PC-9 (cell line): ENCODE measurements at regions of chr17 and their contacts with region 1.

Region 1: DNA sequence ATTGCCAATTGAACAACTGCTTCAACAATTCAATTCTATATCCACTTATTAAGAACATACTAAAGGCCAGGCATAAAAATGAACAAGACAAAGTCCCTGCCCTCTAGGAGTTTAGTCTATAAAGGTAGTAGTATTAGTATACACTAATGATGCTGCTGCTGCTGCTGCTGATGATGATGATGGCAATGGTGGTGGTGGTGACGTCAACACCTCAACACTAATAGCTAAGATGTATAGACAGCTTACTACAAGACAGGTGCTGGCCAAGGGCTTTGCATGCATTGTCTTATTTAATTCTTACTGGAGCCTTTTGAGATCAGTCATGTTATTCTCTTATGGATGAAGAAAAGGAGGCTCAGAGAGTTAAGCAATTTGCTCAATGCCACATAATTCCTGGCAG is 164.4 kb upstream of the ASIC2 start:
- DNase-seq: no peak
- H3K4me3 ChIP-seq: no peak overlapping the region
- H3K27ac ChIP-seq: no peak overlapping the region
- H3K4me1 ChIP-seq: no peaks in the 10 kb centered on the region
- H3K27me3 ChIP-seq: no peaks in the 10 kb centered on the region
- CTCF ChIP-seq: no peak

Region 2: DNA sequence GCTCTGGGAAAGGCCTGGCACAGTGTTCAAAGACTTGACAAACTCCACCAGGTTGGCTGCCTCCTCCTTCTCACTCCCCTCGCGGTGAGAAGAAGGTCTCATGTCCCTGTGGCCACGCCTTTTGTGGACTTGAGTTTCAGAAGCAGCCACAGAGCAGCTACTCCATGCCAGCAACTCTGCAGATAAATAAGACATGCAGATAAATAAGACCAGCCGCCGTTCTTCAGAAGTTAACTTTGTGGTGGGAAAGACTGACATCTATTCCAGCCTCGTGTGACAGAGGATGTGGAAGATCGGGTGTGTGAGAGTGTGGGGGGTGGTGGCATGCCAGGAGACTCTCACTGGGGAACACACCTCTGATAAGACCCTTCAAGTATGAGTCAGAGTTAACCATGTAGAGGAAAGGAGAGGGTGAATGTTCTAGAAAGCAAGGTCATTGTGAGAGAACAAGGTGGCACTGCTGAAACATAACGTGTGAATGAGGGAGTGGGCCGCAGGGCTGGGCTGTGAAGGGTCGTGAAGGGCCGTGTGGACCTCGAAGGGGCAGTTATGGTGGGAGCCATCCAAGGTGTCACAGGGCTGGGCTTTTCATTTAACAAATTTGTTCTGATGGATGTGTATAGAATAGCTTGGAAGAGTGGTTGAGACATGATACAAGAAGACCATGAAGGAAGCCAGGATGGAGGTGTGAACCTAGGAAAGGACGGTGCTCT is 465.0 kb before region 1 on chr17:
- CTCF ChIA-PET with region 1: no interaction called
- POLR2A ChIA-PET with region 1: interaction called, 10 read pairs
- intact Hi-C with region 1: no loop called
- DNase-seq: no peak
- H3K4me3 ChIP-seq: no peak overlapping the region
- H3K27ac ChIP-seq: no peak overlapping the region
- H3K4me1 ChIP-seq: no peaks in the 10 kb centered on the region
- H3K27me3 ChIP-seq: peaks cover 53% of the 10 kb centered on the region
- CTCF ChIP-seq: no peak

Region 3: DNA sequence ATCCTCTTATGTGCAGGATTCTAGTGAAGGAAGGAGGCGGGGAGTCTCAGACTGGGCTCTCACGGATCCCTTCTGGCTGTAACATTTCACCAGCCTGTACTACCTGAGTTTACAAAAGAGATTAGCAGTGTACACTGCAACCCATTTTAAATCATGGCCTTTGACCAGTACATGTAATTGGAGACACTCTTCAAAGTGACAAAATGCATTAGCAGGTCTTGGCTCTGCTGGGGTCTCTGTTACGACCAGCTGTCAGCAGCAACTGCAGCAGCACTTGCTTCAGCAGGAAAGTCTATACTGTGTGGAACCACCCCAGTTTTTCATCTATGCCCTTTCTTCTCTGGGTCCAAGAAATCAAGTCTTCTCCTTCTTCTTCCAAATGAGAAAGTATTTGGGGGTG is 158.4 kb after region 1 on chr17:
- CTCF ChIA-PET with region 1: no interaction called
- POLR2A ChIA-PET with region 1: no interaction called
- intact Hi-C with region 1: no loop called
- DNase-seq: no peak
- H3K4me3 ChIP-seq: no peak overlapping the region
- H3K27ac ChIP-seq: no peak overlapping the region
- H3K4me1 ChIP-seq: no peaks in the 10 kb centered on the region
- H3K27me3 ChIP-seq: peaks cover 29% of the 10 kb centered on the region
- CTCF ChIP-seq: no peak